ENCODE measurements at regions of chr1 and their contacts with region 1.

Region 1: GRCh38 chr1:182391362-182392044 is at the start of gene GLUL:
- DNase-seq: peak; percentile 63
- ATAC-seq: peak; percentile 83
- H3K4me3 Mint-ChIP-seq: peak within 1 kb of the TSS; percentile 96
- H3K27ac Mint-ChIP-seq: peak within 1 kb of the TSS; percentile 87
- H3K4me1 Mint-ChIP-seq: peaks cover 33% of the 10 kb centered on the region
- H3K27me3 Mint-ChIP-seq: peaks cover 4% of the 10 kb centered on the region
- CTCF ChIP-seq: no peak
- total RNA-seq, gene GLUL: 36.8 and 37.8 TPM in 2 replicates

Region 2: DNA sequence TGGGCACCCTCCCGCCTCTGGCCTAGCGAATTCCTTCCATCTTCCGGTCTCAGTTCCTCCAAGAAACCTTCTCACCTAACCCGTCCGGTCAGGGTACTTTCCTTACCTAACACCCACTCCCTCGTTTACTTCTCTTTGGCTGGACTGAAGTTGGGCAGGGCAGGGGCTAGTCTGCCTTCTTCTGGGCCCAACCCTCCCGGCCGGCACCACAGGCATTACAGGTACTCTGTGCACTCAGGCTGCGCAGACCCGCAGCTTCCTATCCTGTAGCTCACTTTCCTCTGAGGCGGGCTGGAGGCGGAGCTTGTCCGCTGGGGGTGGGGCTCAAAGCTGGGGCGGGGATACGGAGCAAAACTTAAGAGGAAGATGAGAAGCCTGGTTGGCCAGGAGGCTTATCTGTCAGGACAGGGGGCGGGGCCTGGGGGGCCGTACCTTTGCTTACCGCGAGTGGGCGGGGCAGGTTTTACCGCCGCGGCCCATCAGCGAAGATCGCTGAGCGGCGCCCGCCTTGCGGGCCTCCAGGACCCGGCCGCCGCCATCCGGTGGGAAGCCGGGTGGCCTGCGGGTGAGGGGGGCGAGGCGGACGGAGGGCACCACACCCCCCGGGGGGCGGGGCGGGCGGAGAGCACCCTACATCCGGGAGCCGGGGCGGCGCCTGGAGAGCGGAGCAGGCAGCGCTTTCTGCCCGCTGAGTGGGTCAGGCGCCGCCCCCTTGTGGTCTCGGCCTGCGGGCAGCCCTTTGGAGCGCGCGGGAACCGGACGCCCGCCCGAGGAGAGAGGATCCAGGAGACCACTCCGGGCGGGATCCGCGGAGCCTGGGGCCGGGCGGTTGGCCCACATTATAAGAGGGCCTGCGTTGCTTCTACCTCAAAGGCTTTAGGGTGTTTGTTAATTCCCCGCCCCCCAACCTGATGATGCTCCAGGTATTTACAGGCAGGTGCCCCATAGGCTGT is 361.8 kb before region 1 on chr1:
- CTCF ChIA-PET with region 1: no interaction called
- POLR2A ChIA-PET with region 1: no interaction called
- intact Hi-C with region 1: loop called (anchors 1 kb)
- DNase-seq: peak; percentile 98
- ATAC-seq: peak; percentile 94
- H3K4me3 Mint-ChIP-seq: peak overlapping the region; percentile 97
- H3K27ac Mint-ChIP-seq: peak overlapping the region; percentile 97
- H3K4me1 Mint-ChIP-seq: peaks cover 15% of the 10 kb centered on the region
- H3K27me3 Mint-ChIP-seq: no peaks in the 10 kb centered on the region
- CTCF ChIP-seq: no peak

Region 3: DNA sequence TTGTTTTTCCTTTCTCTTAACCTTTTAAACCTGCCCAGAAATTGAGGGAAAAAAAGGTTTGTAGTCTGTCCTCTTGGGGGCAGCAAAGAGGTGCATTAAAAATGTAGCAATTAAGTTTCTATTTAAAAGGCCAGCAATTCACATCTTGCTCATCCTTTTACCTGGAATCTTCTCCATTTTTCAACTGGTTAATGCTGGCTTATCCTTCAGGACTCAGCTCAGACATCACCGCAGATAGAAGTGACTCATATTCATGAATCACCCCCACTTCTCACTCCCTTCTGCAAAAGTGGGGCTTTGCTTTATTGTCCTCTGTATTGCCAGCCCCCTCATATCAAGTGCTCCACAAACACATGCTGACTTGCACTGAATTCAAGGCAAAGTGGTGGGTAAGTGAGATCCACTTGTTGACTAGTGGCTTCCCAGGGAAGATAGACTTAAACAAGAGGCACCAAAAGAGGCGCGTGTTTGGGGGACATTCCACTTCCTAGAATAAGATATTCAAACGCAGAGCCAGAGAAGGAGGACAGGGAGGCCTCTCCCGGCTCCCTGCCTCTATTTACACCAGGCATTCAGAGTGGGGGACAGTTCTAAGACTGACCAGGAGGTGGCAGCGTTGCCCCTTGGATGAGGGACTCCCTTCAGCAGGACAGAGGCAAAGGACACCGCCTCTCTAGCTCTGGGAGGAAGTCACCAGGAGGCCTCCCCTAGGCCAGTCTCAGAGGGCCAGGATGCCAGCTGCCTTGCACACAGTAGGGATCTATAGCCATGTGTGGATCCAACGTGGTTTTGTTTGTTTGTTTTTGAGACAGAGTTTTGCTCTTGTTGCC is 306.8 kb before region 1 on chr1:
- CTCF ChIA-PET with region 1: interaction called, 18 read pairs
- POLR2A ChIA-PET with region 1: no interaction called
- intact Hi-C with region 1: loop called (anchors 1 kb)
- DNase-seq: peak; percentile 47
- ATAC-seq: peak; percentile 77
- H3K4me3 Mint-ChIP-seq: no peak overlapping the region
- H3K27ac Mint-ChIP-seq: no peak overlapping the region
- H3K4me1 Mint-ChIP-seq: peaks cover 4% of the 10 kb centered on the region
- H3K27me3 Mint-ChIP-seq: no peaks in the 10 kb centered on the region
- CTCF ChIP-seq: no peak

Region 4: DNA sequence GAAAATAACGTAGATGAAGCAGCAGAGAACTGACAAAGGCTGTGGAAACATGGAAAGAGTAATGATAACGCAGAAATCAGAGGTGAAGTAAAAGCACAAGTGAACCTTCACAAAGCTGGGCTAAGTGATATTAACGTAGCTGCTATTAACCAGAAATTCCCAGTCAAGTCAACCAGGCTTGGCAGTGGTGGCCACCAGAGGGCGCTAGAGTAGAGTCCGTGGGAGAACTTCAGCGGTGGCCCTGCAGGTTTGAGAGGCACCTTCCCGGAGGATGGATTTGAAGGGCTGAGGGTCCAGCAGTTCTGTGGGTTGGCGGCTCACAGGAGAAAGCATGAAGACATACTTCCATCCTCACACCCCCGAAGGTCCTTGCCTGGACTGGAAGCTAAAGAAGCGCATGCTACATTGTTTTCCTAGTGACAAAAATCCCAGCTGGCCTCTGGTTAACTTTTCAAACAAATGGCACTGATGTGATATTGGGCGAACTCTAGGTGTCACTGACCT is 248.3 kb before region 1 on chr1:
- CTCF ChIA-PET with region 1: interaction called, 284 read pairs
- POLR2A ChIA-PET with region 1: interaction called, 6 read pairs
- intact Hi-C with region 1: loop called (anchors 1 kb)
- DNase-seq: peak; percentile 72
- ATAC-seq: peak; percentile 56
- H3K4me3 Mint-ChIP-seq: no peak overlapping the region
- H3K27ac Mint-ChIP-seq: no peak overlapping the region
- H3K4me1 Mint-ChIP-seq: no peaks in the 10 kb centered on the region
- H3K27me3 Mint-ChIP-seq: peaks cover 12% of the 10 kb centered on the region
- CTCF ChIP-seq: no peak

Region 5: DNA sequence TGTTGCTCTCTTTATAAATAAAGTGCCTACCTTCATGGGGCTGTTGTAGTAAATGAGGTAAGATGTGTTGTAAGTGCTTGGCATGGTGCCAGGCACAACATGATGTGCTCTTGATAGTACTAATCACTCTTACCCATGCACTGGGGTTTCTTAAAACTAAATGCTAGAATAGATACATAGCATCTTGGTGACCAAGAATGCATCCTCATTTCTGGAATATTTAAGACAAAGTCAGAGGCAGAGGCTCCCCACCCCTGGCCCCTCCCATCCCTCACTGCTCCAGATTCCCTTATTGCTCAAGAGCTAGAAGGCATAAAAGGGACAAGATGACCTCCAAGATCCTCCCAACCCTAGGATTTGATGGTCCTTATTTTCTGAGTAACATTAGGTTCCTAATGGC is 61.2 kb before region 1 on chr1:
- CTCF ChIA-PET with region 1: interaction called, 5 read pairs
- POLR2A ChIA-PET with region 1: no interaction called
- intact Hi-C with region 1: loop called (anchors 2 kb)
- DNase-seq: no peak
- ATAC-seq: no peak
- H3K4me3 Mint-ChIP-seq: no peak overlapping the region
- H3K27ac Mint-ChIP-seq: no peak overlapping the region
- H3K4me1 Mint-ChIP-seq: peaks cover 17% of the 10 kb centered on the region
- H3K27me3 Mint-ChIP-seq: no peaks in the 10 kb centered on the region
- CTCF ChIP-seq: no peak